Left cardiac atrium (tissue), 4 donors: ENCODE measurements at regions of chr19 and their contacts with region 1.

Region 1: GRCh38 chr19:18251587-18252369 is 22.5 kb downstream of the IQCN start:
- DNase-seq: peak; percentile 68
- ATAC-seq: peak; percentile 58 to 76

Region 2: GRCh38 chr19:18120127-18120526 is 131.7 kb before region 1 on chr19:
- intact Hi-C with region 1: no loop called
- DNase-seq: no peak
- ATAC-seq: no peak

Region 3: DNA sequence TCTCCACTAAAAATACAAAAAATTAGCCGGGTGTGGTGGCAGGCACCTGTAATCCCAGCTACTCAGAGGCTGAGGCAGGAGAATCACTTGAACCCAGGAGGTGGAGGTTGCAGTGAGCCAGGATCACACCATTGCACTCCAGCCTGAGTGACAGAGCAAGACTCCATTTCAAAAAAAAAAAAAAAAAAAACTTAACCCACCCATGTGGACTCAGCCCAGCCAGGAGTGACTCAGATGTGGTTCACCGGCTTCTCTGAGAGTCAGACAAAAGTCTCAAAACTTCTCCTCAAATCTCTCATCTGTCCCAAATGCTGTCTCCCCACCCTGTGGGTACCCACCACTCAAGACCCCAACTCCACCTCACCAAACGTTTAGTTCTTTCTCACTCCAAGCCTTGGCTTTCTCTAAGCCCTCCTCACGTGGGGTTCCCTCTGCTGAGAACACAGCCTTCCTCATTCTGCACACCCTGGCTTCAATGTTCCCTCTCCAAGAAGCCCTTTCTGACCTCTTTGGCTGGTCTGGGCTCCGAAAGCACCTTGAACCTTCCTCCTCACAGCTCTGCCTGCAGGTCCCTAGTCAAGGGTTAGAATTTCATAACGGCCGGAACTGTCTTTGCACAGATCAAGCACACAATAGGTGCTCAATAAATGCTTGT is 36.9 kb before region 1 on chr19:
- intact Hi-C with region 1: loop called in 1 of 2 experiments (anchors 5 kb)
- DNase-seq: no peak
- ATAC-seq: peak in 1 of 2 donors; percentile 30